GM18951 (cell line): ENCODE measurements at regions of chr19 and their contacts with region 1.

Region 1: GRCh38 chr19:43784981-43785808 is 4.4 kb upstream of the KCNN4 start:
- POLR2A ChIP-seq: no peak

Region 2: DNA sequence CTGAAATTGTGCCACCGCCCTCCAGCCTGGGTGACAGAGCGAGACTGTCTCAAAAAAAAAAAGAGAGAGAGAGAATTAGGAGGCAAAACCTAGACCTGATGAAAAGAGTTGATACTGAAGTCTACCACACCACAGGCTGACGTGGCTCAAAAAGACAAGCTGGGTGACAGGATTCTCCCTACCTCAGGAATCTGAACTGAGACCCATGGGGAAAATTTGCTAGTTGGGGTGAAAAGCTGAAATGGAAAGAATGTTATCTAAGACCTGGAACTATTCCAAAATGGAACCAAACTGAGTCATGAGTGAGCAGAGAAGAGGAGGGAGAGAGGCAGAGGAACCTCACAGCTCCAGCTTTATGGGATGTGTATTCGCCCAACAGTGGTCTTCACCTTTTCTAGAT is 42.2 kb before region 1 on chr19:
- in situ Hi-C with region 1: loop called (anchors 5 kb)
- POLR2A ChIP-seq: no peak